Transverse colon (tissue), 4 donors: ENCODE measurements at regions of chr6 and their contacts with region 1.

Region 1: DNA sequence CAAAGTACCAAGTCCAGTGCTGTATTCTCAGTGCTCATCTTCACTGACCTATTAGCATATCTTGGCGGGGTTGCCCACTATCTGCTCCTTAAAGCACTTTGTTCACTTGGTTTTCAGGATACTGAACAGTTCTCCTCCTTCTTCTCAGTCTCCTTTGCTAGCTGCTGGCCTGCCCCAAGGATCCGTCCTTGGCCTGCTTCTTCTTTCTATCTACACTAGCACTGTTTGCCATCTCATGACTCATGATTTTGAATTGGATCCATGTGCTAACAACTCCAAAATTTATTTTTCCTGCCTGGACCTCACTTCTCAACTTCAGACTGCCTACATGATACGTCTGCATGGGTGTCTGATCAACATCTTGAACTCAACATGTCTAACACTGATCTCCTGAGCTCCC is 15.5 kb downstream of the TPD52L1 start:
- DNase-seq: no peak
- H3K4me3 ChIP-seq: no peak overlapping the region
- H3K27ac ChIP-seq: no peak overlapping the region
- H3K4me1 ChIP-seq: no peaks in the 10 kb centered on the region
- H3K27me3 ChIP-seq: no peaks in the 10 kb centered on the region
- CTCF ChIP-seq: no peak
- EP300 ChIP-seq: no peak
- POLR2A ChIP-seq: no peak

Region 2: GRCh38 chr6:123702943-123703342 is 1466.1 kb before region 1 on chr6:
- in situ Hi-C with region 1: no loop called
- intact Hi-C with region 1: no loop called
- DNase-seq: no peak
- H3K4me3 ChIP-seq: no peak overlapping the region
- H3K27ac ChIP-seq: no peak overlapping the region
- H3K4me1 ChIP-seq: no peaks in the 10 kb centered on the region
- H3K27me3 ChIP-seq: no peaks in the 10 kb centered on the region
- CTCF ChIP-seq: no peak
- EP300 ChIP-seq: no peak
- POLR2A ChIP-seq: no peak

Region 3: DNA sequence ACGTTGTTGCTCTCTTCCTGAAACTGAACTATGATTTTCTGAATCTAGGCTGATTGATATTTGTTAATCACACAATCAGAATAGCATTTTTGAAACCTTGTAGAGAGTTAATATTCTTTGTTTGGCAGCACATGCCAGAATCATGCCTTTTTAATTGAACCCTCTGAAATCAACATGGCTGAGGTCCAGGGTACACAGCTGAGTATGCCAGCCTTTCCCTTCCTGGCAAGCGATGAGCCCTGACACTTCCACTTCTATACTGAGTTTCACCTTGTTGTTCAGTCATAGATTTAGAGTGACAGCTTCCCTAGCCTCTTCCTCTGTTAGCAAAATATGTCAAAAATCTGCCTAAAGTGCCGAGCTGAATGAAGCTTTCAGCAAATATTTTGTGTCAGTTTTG is 125.9 kb after region 1 on chr6:
- in situ Hi-C with region 1: loop called in 1 of 4 experiments (anchors 10 kb)
- intact Hi-C with region 1: no loop called
- DNase-seq: no peak
- H3K4me3 ChIP-seq: no peak overlapping the region
- H3K27ac ChIP-seq: no peak overlapping the region
- H3K4me1 ChIP-seq: peaks cover 0 to 7% (median under 1%) of the 10 kb centered on the region in 4 donors
- H3K27me3 ChIP-seq: no peaks in the 10 kb centered on the region
- CTCF ChIP-seq: no peak
- EP300 ChIP-seq: no peak
- POLR2A ChIP-seq: no peak

Region 4: GRCh38 chr6:125346201-125346925 is 177.3 kb after region 1 on chr6:
- in situ Hi-C with region 1: no loop called
- intact Hi-C with region 1: no loop called
- DNase-seq: peak; percentile 15
- H3K4me3 ChIP-seq: no peak overlapping the region
- H3K27ac ChIP-seq: peak overlapping the region in 3 of 4 donors; percentile 5 to 68 (median 10)
- H3K4me1 ChIP-seq: no peaks in the 10 kb centered on the region
- H3K27me3 ChIP-seq: no peaks in the 10 kb centered on the region
- CTCF ChIP-seq: no peak
- EP300 ChIP-seq: no peak
- POLR2A ChIP-seq: no peak